ENCODE measurements at regions of chr22 and their contacts with region 1.

Region 1: DNA sequence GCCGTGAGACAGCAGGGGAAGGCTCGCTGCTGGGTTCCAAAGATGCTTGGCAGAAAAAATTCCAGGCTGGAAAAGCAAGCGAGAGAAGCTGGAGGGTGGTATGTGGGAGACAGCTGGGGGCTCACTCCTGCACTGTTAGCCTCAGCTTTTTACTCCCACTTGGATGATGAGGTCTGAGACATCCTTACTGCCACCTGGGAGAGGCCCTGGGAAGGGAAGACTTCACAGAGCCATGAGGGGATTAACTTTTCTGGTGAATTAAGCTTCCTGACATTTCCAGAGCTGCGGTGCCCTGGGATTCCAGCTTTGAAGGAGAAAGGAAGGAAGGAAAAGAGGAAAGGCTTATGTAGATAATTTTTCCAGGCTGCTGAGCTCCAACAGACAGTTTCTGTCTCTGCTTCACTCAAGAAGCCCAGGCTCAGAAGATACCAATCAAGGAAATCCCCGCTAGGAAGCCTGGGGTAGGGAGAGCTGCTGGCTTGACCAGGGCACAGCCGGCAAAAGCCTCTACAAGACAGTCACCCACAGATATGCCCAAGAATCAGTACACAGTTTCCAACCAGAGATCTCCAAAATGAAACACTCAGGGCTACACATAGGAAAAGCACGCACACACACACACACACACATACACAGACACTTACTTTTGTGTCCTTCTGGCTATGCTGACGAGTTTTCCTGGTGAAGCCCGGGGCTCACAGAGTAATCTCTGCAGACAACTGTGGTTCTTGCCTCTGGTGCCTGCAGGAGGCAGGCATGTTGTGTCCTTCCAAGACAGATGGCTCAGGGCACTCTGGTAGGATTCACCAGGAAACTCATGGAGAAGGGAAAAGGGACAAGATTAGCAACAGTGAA is 907 bp downstream of the MCHR1 start:
- DNase-seq: no peak
- H3K4me3 Mint-ChIP-seq: no peak overlapping the region
- H3K27ac Mint-ChIP-seq: no peak overlapping the region
- H3K4me1 Mint-ChIP-seq: peaks cover 22% of the 10 kb centered on the region
- H3K27me3 Mint-ChIP-seq: peaks cover 17% of the 10 kb centered on the region

Region 2: DNA sequence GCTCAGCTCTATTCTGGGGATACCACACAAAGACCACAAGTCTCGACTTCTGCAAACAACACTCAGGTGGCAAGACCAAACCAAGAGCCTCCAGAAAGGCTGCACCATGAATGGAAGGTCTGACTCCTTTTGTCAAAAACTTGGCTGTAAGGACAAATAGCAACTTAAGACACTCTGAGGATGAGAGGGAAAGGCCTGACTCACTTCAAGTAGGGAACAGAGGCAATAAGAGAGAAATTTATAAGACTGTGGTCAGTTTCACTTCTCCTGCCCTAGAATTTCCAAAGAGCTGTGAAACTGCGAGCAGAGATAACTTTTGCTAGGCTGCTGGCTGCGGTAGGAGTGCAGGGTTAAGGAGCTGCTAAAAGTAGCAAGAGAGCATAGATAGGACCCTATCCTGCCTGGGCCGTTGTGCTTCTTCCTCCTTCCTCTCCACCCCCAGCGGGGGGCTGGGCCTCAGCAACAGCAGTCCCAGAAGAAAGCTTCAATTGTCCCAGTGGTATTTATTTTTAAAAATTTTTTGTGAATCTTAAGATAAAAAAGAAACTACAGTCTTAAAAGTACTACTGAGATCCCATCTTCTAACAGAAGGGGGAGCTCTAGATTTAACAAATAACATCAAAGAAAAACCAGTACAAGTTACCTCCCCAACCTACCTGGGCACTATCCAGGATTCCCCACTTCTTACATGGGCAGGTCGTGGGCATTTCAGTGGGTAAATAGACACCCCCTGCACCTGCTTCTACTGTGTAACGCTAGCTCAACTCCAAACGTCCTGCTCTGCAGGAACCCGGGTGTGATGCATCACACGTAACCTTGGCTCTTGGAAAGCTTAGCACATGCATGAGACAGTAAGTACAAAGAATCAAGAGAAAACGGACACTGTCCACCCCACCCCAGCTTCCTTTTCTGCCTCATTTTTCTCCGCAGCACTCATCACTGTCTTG is 243.4 kb before region 1 on chr22:
- CTCF ChIA-PET with region 1: interaction called, 10 read pairs
- POLR2A ChIA-PET with region 1: no interaction called
- intact Hi-C with region 1: no loop called
- DNase-seq: no peak
- H3K4me3 Mint-ChIP-seq: no peak overlapping the region
- H3K27ac Mint-ChIP-seq: peak overlapping the region; percentile 54
- H3K4me1 Mint-ChIP-seq: peaks cover 49% of the 10 kb centered on the region
- H3K27me3 Mint-ChIP-seq: no peaks in the 10 kb centered on the region

Region 3: DNA sequence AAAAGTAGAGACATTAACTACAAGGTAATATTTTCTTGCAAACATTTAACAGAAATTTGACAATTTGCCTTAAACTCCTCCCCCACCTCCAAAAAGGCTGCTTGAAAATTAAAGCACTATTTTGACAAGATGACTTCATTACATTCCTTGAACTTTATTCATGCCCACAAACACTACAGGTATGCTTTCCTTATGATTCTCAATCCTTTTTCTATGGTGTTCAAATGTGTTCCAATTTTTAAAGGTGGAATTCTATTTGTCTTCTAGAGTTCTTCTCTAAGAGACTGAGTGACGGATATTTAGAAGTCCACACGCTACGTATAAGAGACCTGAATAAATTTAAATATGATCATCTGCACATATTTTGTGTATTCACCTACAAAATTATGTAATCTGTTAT is 113.1 kb before region 1 on chr22:
- CTCF ChIA-PET with region 1: no interaction called
- POLR2A ChIA-PET with region 1: no interaction called
- intact Hi-C with region 1: no loop called
- DNase-seq: no peak
- H3K4me3 Mint-ChIP-seq: no peak overlapping the region
- H3K27ac Mint-ChIP-seq: no peak overlapping the region
- H3K4me1 Mint-ChIP-seq: no peaks in the 10 kb centered on the region
- H3K27me3 Mint-ChIP-seq: no peaks in the 10 kb centered on the region

Region 4: DNA sequence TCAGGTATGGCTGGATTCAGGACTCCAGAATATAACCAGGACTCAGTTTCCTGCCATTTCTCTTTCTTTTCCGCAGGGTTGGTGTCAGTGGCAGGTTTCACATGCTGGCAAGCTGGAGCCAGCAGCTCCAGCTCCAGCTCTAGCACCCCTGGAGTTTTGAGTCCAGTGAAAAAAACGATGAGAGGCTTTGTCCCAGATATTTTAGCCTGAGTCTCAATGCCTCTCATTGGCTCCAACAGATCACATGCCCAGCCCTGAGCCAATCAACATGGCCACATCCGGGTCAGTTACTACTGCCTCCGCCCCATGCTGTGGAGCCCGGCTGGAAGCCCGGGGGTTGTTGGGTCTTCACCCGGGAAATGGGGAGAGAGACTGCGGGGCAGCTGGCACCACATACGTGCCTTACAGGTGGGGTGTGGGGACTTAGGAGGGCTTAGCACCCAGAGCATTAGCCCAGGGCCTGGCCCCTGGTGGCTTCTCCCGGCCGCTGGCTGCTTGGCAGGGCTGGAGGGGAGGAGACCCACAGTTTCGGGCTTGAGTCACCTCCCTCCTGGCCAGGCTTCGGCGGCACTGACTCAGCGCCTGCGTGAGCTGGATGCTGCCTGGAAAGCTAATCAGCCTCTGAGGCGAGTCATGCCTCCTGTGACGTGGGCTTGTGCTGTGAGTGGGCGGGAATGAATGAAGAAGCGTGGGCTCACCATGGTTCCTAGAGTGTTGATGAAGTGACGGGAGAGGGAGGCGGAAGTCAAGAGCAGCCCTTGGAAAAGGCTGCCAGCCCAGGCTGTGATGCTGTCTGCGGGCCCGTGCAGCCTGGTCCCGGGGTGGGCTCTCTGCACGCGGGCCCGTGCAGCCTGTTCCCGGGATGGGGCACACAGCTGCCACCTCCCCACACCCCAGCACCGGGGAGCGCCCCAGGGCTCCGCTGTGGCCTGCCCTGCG is 28.4 kb before region 1 on chr22:
- CTCF ChIA-PET with region 1: interaction called, 11 read pairs
- POLR2A ChIA-PET with region 1: no interaction called
- intact Hi-C with region 1: loop called (anchors 1 kb)
- DNase-seq: peak; percentile 97
- H3K4me3 Mint-ChIP-seq: peak overlapping the region; percentile 70
- H3K27ac Mint-ChIP-seq: peak overlapping the region; percentile 91
- H3K4me1 Mint-ChIP-seq: peaks cover 24% of the 10 kb centered on the region
- H3K27me3 Mint-ChIP-seq: no peaks in the 10 kb centered on the region

Region 5: GRCh38 chr22:40691532-40691931 is 11.3 kb after region 1 on chr22:
- CTCF ChIA-PET with region 1: interaction called, 19 read pairs
- POLR2A ChIA-PET with region 1: no interaction called
- intact Hi-C with region 1: no loop called
- DNase-seq: no peak
- H3K4me3 Mint-ChIP-seq: no peak overlapping the region
- H3K27ac Mint-ChIP-seq: no peak overlapping the region
- H3K4me1 Mint-ChIP-seq: no peaks in the 10 kb centered on the region
- H3K27me3 Mint-ChIP-seq: no peaks in the 10 kb centered on the region

Region 6: DNA sequence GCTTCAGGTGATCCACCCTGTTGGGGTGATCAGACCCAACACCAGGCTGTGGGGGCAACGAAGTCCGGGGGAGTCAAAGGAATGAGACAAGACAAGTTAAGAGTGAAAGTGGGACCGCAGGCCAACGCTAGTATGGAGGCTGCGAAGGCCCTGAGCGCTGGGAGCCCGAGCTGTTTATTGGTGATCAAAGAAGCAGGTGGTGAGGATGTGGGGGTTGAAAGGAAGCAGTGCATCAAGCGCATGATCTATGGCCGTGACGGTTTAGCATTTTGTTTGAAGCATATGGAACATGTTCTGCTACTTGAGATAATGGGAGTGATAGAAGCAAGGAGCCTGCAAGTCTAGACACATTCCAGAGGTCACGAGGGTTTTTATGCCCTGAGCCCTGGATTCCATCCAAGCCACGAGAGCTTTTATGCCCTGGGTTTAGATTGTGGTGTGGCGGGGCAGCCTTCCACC is 48.6 kb after region 1 on chr22:
- CTCF ChIA-PET with region 1: interaction called, 7 read pairs
- POLR2A ChIA-PET with region 1: no interaction called
- intact Hi-C with region 1: loop called (anchors 1 kb)
- DNase-seq: peak; percentile 79
- H3K4me3 Mint-ChIP-seq: peak overlapping the region; percentile 49
- H3K27ac Mint-ChIP-seq: peak overlapping the region; percentile 77
- H3K4me1 Mint-ChIP-seq: peaks cover 43% of the 10 kb centered on the region
- H3K27me3 Mint-ChIP-seq: no peaks in the 10 kb centered on the region

Region 7: DNA sequence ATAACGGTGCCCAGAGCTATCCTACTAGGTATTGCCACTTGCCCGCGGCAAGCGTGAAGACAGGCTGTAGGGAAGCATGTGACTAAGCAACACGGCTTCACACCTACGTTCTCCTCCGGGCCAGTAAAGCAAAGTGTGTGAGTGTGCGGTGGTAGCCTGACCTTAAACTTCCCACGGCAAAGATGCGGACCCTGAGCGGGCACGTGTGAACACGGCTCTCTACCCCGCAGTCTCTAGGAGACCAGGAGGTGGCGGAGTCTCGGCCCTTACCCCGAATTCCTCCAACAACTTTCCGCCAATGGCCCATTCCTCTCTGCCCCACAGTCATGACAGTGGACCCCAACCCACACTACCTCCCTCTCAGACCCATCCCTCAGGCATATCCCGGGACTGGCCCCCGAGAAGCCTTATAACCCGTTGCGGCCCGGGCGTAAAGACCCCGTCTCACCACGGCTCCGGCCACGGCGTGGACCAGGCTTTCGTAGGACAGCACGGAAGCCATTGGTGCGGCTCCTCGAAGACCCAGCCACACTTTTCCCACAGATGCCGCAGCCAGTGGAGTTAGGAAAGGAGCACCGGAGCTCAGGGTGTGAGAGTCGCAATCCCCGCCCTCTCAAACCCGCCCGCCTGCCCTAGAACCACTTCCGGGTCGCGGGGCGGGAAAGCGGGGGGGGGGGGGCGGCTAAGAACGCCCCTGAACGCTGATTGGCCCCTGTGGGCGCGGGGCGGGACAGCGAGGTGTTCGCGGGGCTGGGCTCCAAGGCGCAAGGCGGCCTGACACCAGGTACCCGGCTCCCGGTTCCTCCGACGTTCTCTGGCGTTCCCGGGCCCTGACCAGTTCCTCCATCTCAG is 138.8 kb after region 1 on chr22 and contains the start of gene SLC25A17:
- CTCF ChIA-PET with region 1: interaction called, 20 read pairs
- POLR2A ChIA-PET with region 1: no interaction called
- intact Hi-C with region 1: loop called (anchors 1 kb)
- DNase-seq: peak; percentile 92
- H3K4me3 Mint-ChIP-seq: peak within 1 kb of the TSS; percentile 92
- H3K27ac Mint-ChIP-seq: peak within 1 kb of the TSS; percentile 76
- H3K4me1 Mint-ChIP-seq: peaks cover 33% of the 10 kb centered on the region
- H3K27me3 Mint-ChIP-seq: no peaks in the 10 kb centered on the region
- total RNA-seq, gene SLC25A17: 29.3 to 30.8 TPM

Region 8: DNA sequence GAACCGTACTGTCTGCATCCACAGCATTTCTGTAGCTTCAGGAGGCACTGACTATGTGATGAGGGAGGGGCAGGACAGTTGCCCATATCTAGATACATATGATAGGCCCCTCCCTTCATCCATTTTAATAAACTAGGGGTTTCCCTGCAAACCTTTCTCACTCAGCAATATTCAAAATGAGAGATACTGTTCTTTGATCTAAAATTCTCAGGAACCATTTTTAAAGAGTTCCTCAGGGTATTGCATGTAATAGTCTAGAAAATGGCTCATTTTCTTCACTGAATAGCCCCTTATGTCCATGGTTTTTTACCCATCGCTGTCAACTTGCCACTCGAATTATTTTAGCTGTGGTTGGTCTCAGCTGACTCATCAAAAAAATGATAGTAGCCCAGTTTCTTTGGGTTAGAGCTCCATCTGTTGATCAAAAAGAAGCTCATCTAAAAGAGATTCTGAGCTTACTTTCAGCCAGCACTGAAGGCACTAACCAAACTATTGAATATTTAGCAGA is 218.7 kb after region 1 on chr22:
- CTCF ChIA-PET with region 1: interaction called, 27 read pairs
- POLR2A ChIA-PET with region 1: no interaction called
- intact Hi-C with region 1: loop called (anchors 1 kb)
- DNase-seq: peak; percentile 41
- H3K4me3 Mint-ChIP-seq: peak overlapping the region; percentile 20
- H3K27ac Mint-ChIP-seq: peak overlapping the region; percentile 88
- H3K4me1 Mint-ChIP-seq: peaks cover 14% of the 10 kb centered on the region
- H3K27me3 Mint-ChIP-seq: no peaks in the 10 kb centered on the region